Heart left ventricle (tissue), 16 donors: ENCODE measurements at regions of chr15 and their contacts with region 1.

Region 1: GRCh38 chr15:94655249-94655880 is 424.0 kb downstream of the MCTP2 start:
- DNase-seq: no peak
- ATAC-seq: no peak
- H3K4me3 ChIP-seq: no peak overlapping the region
- H3K27ac ChIP-seq: no peak overlapping the region
- H3K4me1 ChIP-seq: no peaks in the 10 kb centered on the region
- H3K27me3 ChIP-seq: peaks cover 0 to 8% (median 0%) of the 10 kb centered on the region in 9 donors
- CTCF ChIP-seq: no peak
- POLR2A ChIP-seq: no peak

Region 2: DNA sequence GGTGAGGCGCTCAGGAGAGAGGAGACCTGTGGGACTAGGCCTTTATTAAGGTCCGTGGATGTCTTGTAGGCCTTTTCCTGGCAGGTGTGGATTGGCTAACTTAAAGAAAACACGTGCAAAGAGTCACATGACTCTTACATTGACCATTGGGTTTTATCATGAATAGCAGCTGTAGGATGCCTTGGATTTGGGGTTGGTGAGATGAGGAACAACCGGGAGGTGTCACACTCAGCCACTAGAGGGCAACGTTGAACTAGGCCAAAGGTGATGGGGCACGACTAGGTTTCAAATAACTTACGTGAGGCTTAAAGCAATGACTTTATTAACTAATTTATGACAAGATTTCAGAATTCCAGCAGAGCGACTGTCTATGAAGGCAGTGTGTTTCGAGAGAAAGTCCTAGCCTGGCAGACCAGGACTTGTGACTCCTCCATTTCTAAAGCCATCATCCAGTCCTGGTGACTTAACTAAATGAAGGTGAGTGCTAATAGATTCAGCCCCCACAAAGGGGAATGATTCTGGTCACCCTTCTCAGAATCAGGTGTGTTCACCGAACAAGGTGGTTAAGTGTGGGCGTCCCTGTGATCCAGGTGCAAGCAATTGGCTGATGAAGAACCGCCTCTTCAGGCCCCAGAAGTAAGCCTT is 78.4 kb before region 1 on chr15:
- intact Hi-C with region 1: loop called in 1 of 10 experiments (anchors 10 kb)
- DNase-seq: no peak
- ATAC-seq: no peak
- H3K4me3 ChIP-seq: no peak overlapping the region
- H3K27ac ChIP-seq: no peak overlapping the region
- H3K4me1 ChIP-seq: no peaks in the 10 kb centered on the region
- H3K27me3 ChIP-seq: peaks cover 0 to 20% (median 0%) of the 10 kb centered on the region in 9 donors
- CTCF ChIP-seq: peak in 11 of 12 donors; percentile 26 to 59 (median 44)
- POLR2A ChIP-seq: no peak